Common myeloid progenitor, CD34-positive (primary cell): ENCODE measurements at regions of chr22 and their contacts with region 1.

Region 1: DNA sequence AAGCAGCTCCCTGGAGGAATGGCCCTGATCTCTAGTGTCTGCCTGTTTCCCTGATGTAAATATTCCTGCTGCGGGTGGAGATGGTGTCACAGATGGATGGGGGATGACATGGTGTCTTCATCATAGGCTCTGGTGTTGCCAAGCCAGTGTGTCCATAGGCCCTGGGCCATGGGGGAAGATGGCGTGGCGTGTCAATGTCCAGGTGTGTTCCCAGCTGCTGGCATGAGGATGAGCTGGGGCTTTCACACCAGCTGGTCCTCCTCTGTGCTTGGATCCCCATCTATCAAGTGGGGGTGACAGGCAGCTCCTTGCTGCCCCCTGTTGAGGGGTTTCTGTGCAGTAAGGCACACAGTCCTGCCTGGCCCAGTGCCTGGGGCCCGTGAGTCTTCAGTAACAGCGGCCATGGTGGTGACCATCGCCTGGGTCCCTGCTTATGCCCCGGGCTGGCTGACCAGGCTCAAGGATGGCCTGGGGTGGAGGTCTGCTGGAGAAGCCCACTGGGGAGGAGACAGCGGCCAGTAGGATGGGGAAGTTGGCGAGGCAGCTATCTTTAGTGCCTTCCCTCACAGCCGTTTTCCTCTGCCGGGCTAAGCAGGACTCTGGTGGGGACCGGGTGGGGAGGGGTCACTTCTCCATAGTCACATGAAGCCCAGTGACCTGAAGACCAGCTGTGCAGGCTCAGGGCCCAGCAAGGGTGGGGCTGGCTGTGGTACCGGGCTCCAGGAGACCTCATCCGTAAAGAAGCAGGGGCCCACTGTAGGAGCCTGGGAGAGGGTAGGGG is 12.7 kb downstream of the RPL3 start:
- DNase-seq: peak; percentile 34 to 59 (median 55)
- H3K4me3 ChIP-seq: no peak overlapping the region
- H3K27ac ChIP-seq: no peak overlapping the region
- H3K4me1 ChIP-seq: peaks cover 0 to 12% (median 6%) of the 10 kb centered on the region in 4 experiments
- H3K27me3 ChIP-seq: peaks cover 0 to 7% (median 2%) of the 10 kb centered on the region in 5 experiments

Region 2: GRCh38 chr22:39170825-39171622 is 135.7 kb before region 1 on chr22:
- CTCF ChIA-PET with region 1: interaction called, 34 read pairs
- POLR2A ChIA-PET with region 1: interaction called, 6 read pairs
- DNase-seq: peak; percentile 64 to 73 (median 71)
- H3K4me3 ChIP-seq: peak overlapping the region in 3 of 7 experiments; percentile 19 to 57 (median 33)
- H3K27ac ChIP-seq: no peak overlapping the region
- H3K4me1 ChIP-seq: peaks cover 3 to 37% (median 27%) of the 10 kb centered on the region in 4 experiments
- H3K27me3 ChIP-seq: peaks cover 0 to 9% (median 4%) of the 10 kb centered on the region in 5 experiments

Region 3: DNA sequence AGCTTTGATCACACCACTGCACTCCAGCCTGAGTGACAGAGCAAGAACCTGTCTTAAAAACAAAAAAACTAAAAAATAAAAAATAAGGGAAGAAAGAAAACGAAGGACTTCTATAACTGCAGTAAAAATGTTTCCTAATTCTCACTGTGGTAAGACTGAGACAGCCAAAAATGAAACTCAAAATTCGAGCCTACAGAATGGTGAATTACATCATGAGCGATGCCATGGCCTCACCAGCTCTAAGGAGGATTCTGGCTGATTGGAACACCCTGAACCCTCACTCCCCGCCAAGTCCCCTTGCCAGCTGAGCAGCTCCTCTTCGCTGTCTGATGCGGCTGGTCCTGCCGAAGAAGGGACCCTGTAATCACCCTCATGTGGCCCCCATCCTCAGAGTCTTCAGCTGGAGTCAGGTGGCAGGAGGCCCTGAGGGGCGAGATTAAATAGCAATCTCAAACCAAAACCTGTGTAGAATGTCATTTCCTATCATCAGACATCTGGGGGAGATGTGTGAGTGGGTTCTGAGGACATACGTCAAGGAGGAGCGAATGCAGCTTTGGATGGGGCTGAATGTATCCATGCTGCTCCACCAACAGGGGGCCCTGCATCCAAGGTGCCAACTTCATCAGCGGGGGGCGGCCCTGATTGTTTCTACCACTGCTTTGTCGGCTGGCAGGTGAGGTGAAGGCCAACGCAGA is 91.2 kb before region 1 on chr22:
- CTCF ChIA-PET with region 1: interaction called, 24 read pairs
- POLR2A ChIA-PET with region 1: no interaction called
- DNase-seq: peak; percentile 62 to 82 (median 77)
- H3K4me3 ChIP-seq: no peak overlapping the region
- H3K27ac ChIP-seq: no peak overlapping the region
- H3K4me1 ChIP-seq: peaks cover 0 to 6% (median 0%) of the 10 kb centered on the region in 4 experiments
- H3K27me3 ChIP-seq: peaks cover 0 to 47% (median 18%) of the 10 kb centered on the region in 5 experiments

Region 4: DNA sequence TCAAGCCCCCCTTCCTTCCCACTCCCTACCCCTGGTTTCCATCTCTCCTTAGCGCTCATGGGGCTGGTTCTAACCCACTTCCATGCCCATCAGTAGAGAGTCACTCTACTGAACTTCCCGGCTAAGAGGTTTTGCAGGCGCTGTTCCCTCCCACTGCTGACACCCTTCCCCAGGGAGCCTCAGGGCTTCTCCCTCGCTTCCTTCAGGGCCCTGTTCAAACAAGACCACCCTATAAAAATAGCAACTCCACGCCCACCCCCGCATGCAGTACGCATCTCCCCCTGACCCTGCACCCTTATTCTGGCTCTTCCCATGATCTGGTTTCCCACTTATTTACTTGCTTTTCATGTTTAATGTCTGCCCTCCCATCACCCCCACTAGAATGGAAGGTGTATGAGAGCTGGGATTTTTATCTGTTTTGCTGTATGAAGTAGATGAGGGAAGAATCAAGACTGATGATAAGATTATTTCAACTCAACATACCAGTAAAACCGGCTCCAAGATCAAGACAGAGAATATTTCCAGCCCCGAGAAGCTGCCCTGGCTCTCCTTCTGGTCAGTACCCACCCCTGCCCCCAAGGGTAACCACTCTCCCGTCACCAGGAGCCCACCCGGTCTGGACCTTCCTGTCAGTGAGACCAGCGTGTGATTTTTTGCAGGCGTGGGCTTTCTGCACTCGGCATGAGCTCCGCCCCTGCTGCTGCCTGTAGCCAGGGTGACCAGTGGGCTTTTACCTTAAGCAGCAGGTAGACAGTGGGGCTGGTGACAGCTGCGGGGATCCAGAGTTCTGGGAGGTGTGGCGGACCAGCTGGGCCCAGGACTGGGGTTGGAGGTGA is 13.1 kb before region 1 on chr22:
- CTCF ChIA-PET with region 1: interaction called, 12 read pairs
- POLR2A ChIA-PET with region 1: no interaction called
- DNase-seq: no peak
- H3K4me3 ChIP-seq: no peak overlapping the region
- H3K27ac ChIP-seq: no peak overlapping the region
- H3K4me1 ChIP-seq: peaks cover 0 to 22% (median 14%) of the 10 kb centered on the region in 4 experiments
- H3K27me3 ChIP-seq: peaks cover 0 to 20% (median 2%) of the 10 kb centered on the region in 5 experiments

Region 5: DNA sequence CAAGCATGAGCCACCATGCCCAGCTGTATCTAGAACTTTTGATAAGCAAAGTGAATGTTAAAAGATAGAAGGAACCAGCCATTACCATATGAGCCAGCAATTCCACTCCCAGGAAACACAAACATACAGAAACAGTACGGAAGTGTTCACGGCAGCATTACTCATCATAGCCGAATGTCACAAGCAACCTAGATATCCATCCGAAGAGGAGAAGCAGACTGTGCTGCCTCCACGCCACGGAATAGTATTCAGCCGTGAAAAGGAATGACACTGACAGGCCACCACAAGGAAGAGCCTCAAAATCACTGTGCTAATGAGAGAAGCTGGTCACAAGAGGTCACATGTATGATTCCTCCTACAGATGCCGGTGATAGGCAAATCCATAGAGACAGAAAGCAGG is 132.4 kb after region 1 on chr22:
- CTCF ChIA-PET with region 1: no interaction called
- POLR2A ChIA-PET with region 1: no interaction called
- DNase-seq: peak in 2 of 3 donors; percentile 41 to 53
- H3K4me3 ChIP-seq: no peak overlapping the region
- H3K27ac ChIP-seq: no peak overlapping the region
- H3K4me1 ChIP-seq: peaks cover 0 to 40% (median 14%) of the 10 kb centered on the region in 4 experiments
- H3K27me3 ChIP-seq: no peaks in the 10 kb centered on the region